ENCODE measurements at regions of chr18 and their contacts with region 1.

Region 1: DNA sequence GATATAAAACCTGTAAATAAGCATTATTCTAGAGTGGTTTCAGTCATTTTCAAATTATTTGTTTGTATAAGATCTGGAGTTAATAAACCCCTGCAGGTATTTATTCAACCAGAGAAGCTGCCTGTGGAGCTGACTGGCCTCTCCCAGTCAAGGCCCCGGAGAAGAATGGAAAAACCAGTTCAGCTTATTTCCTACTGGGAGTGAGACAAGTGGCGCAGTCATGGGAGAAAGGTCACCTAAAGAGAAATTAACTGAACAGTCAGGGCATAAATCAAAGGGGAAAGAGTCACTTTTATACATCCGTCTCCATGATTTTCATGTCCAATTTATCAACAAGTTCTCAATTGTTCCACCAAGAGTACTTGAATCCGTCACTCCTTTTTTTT is 240.9 kb downstream of the RNF152 start:
- DNase-seq: peak; percentile 22 to 87
- H3K4me3 ChIP-seq: no peak overlapping the region
- H3K27ac ChIP-seq: peak overlapping the region; percentile 68
- H3K4me1 ChIP-seq: peaks cover 8% of the 10 kb centered on the region
- H3K27me3 ChIP-seq: no peaks in the 10 kb centered on the region
- CTCF ChIP-seq: no peak

Region 2: GRCh38 chr18:61606759-61607158 is 45.1 kb before region 1 on chr18:
- CTCF ChIA-PET with region 1: no interaction called
- POLR2A ChIA-PET with region 1: no interaction called
- intact Hi-C with region 1: loop called (anchors 10 kb)
- DNase-seq: peak; percentile 63 to 75
- H3K4me3 ChIP-seq: no peak overlapping the region
- H3K27ac ChIP-seq: no peak overlapping the region
- H3K4me1 ChIP-seq: no peaks in the 10 kb centered on the region
- H3K27me3 ChIP-seq: no peaks in the 10 kb centered on the region
- CTCF ChIP-seq: no peak

Measured in PC-9 (cell line).